GM10248 (cell line): ENCODE measurements at regions of chr1 and their contacts with region 1.

Region 1: DNA sequence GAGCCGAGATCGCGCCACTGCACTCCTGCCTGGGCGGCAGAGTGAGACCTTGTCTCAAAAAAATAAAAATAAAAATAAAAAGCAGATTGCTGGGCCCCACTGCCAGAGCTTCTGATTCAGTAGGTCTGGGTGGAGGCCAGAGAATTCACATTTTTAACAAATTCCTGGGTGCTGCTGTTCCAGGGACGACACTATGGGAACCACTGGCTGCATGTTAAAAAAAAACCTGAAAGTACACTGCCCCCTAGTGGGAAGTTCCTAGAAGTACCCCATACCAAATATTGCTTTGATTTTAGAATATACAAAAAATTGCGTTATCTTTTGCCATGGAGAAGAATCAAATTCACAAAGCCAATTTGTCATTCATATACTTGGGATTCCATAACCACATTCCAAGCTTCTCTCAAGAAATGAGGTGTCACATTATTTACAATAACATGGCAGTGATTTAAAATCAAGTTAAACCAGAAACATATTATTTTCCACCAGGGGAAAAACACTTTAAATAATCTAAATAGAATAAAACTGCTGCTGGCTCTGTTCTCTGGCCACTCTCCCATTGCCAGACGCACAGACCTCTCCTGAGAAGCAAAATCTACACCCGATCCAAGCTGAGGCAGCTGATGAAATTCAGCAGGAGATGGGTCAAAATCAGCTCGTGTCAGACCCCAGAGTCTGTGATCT is 27.4 kb downstream of the SYF2 start:
- DNase-seq: peak; percentile 65
- CTCF ChIP-seq: peak; percentile 42

Region 2: GRCh38 chr1:25194572-25195020 is 10.3 kb before region 1 on chr1:
- CTCF ChIA-PET with region 1: interaction called, 25 read pairs
- POLR2A ChIA-PET with region 1: no interaction called
- DNase-seq: no peak
- CTCF ChIP-seq: no peak

Region 3: GRCh38 chr1:25216123-25216522 is 11.2 kb after region 1 on chr1:
- CTCF ChIA-PET with region 1: interaction called, 24 read pairs
- POLR2A ChIA-PET with region 1: no interaction called
- DNase-seq: no peak
- CTCF ChIP-seq: no peak